ENCODE measurements at regions of chr6 and their contacts with region 1.

Region 1: GRCh38 chr6:71383901-71384489 is 95.4 kb downstream of the OGFRL1 start:
- DNase-seq: no peak

Region 2: GRCh38 chr6:70955441-70956190 is 428.4 kb before region 1 on chr6:
- intact Hi-C with region 1: no loop called
- DNase-seq: peak; percentile 91

Region 3: GRCh38 chr6:71333697-71334096 is 50.3 kb before region 1 on chr6:
- intact Hi-C with region 1: no loop called
- DNase-seq: no peak

Region 4: GRCh38 chr6:71420693-71421328 is 36.8 kb after region 1 on chr6:
- intact Hi-C with region 1: loop called (anchors 5 kb)
- DNase-seq: peak; percentile 96

Region 5: DNA sequence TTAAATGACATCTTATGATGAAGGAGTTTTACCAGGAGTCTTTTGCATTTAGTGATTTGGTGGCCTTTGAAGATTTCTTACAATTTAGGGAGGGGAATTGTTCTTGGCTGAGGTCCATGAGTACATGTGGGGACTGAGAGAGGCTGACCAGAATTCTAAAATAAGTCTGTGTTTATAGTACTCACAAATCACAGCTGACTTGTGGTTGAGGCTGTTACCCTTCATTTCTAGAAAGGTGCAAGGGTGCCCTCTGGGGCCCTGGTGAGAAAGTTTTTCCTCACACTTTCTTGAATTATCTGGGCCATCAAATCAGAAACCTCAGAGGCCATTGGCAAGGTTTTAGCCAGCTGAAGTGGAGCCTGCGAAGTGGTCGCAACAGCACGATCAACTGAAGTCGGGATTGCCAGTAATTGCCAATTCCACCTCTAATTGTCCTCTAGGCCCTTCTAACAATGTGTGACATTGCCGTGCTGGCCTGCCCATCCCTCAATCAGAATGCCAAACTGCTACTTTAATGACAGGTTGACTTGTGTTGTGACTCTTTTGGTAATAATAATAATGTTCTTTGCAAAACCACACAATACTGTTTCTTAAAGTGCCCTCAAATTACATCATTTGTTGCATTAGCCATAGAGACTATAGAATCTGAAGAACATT is 126.2 kb after region 1 on chr6:
- intact Hi-C with region 1: loop called (anchors 2 kb)
- DNase-seq: no peak